ENCODE measurements at regions of chr17 and their contacts with region 1.

Region 1: GRCh38 chr17:68435876-68436842 is 21.1 kb downstream of the WIPI1 start:
- DNase-seq: peak; percentile 93
- H3K4me3 ChIP-seq: peak overlapping the region; percentile 15
- H3K27ac ChIP-seq: peak overlapping the region; percentile 80
- H3K4me1 ChIP-seq: peaks cover 64% of the 10 kb centered on the region
- CTCF ChIP-seq: peak; percentile 95

Region 2: GRCh38 chr17:68172461-68172954 is 263.7 kb before region 1 on chr17:
- CTCF ChIA-PET with region 1: no interaction called
- POLR2A ChIA-PET with region 1: no interaction called
- intact Hi-C with region 1: loop called (anchors 1 kb)
- DNase-seq: peak; percentile 85
- H3K4me3 ChIP-seq: no peak overlapping the region
- H3K27ac ChIP-seq: no peak overlapping the region
- H3K4me1 ChIP-seq: peaks cover 20% of the 10 kb centered on the region
- CTCF ChIP-seq: peak; percentile 100

Region 3: GRCh38 chr17:68179236-68179925 is 256.8 kb before region 1 on chr17:
- CTCF ChIA-PET with region 1: no interaction called
- POLR2A ChIA-PET with region 1: interaction called, 8 read pairs
- intact Hi-C with region 1: loop called (anchors 2 kb)
- DNase-seq: no peak
- H3K4me3 ChIP-seq: no peak overlapping the region
- H3K27ac ChIP-seq: no peak overlapping the region
- H3K4me1 ChIP-seq: peaks cover 3% of the 10 kb centered on the region
- CTCF ChIP-seq: no peak

Region 4: DNA sequence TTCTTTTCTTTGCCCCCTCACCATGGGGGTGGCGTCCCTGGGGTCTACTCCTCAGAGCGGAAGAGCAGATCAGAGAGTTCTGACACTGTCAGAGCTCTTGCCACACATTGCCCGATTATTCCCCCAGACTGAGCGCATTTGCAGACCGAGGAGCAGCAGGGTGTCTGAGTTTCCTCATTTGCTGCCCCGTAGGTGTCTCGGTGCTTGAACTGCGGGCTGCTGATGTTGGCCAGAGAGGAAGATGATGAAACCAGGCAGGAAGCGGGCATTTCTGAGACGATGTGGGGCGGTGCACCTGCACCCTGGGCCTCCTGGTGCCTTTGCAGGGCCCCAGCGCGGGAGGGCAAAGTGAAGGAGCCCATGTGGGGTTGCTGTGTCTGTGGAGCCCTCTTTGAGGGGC is 89.7 kb before region 1 on chr17:
- CTCF ChIA-PET with region 1: no interaction called
- POLR2A ChIA-PET with region 1: interaction called, 4 read pairs
- intact Hi-C with region 1: loop called (anchors 5 kb)
- DNase-seq: peak; percentile 99
- H3K4me3 ChIP-seq: peak overlapping the region; percentile 51
- H3K27ac ChIP-seq: peak overlapping the region; percentile 95
- H3K4me1 ChIP-seq: peaks cover 48% of the 10 kb centered on the region
- CTCF ChIP-seq: no peak; the same call in 1 of the 2 replicates

Region 5: DNA sequence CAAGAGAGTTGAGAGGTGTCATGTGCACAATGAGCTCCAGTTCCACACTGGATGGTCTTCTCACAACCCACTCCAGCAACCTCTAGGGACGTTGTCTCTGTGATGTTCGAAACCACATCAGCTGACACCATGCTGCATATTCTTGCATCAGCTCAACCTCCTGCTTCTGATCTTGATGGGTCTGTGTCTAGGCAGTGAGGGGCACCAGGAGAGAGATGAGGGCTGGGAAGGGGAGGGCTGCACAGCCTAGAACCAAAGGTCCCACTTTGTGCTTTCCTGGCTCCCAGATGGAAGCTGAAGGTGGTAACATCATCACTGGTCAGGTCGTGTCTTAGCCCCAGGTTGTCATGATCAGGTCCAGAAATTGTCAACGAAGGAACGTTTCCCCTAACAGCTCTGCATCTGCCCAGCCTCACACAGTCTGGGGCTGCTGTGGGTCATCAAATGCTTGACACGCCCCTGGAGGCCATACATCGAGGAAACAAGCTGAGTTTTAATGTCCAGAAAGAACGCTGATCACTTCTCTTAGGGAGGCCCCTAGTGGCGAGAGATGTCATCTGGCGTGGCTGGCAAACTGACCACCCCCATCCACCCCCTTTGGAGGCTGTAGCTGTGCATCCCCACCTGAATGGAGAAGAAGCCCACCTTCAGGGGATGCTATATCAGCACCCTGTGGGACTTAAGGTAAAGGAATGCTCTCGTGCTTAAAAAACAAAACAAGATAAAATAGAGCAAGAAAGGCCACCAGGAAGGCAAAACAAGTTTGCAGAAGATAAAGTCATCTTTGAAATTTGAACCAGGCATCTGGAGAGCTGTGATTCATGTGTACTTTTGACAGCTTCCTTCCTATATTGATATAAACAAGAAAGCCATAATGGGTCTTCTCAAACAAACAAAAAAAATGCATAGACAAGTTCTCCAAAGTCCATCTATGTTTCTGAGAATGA is 37.2 kb before region 1 on chr17:
- CTCF ChIA-PET with region 1: interaction called, 4 read pairs
- POLR2A ChIA-PET with region 1: interaction called, 4 read pairs
- intact Hi-C with region 1: loop called (anchors 1 kb)
- DNase-seq: peak; percentile 92
- H3K4me3 ChIP-seq: no peak overlapping the region
- H3K27ac ChIP-seq: peak overlapping the region; percentile 8
- H3K4me1 ChIP-seq: peaks cover 30% of the 10 kb centered on the region
- CTCF ChIP-seq: peak; percentile 100